Activated CD8-positive, alpha-beta T cell treated with anti-CD3 and anti-CD28 coated beads for 36 hours (primary cell): ENCODE measurements at regions of chr12 and their contacts with region 1.

Region 1: GRCh38 chr12:120580787-120581723 is at the start of gene POP5:
- DNase-seq: peak; percentile 97
- ATAC-seq: peak; percentile 96
- H3K4me3 Mint-ChIP-seq: peak within 1 kb of the TSS; percentile 98
- H3K27ac Mint-ChIP-seq: peak within 1 kb of the TSS; percentile 90
- H3K4me1 Mint-ChIP-seq: peaks cover 36% of the 10 kb centered on the region
- H3K27me3 Mint-ChIP-seq: peaks cover 13% of the 10 kb centered on the region
- CTCF ChIP-seq: no peak
- total RNA-seq, gene POP5: 44.3 to 51.1 TPM

Region 2: GRCh38 chr12:119902084-119902509 is 679.0 kb before region 1 on chr12:
- CTCF ChIA-PET with region 1: no interaction called
- POLR2A ChIA-PET with region 1: no interaction called
- intact Hi-C with region 1: no loop called
- DNase-seq: peak; percentile 89
- ATAC-seq: peak; percentile 100
- H3K4me3 Mint-ChIP-seq: no peak overlapping the region
- H3K27ac Mint-ChIP-seq: no peak overlapping the region
- H3K4me1 Mint-ChIP-seq: peaks cover 4% of the 10 kb centered on the region
- H3K27me3 Mint-ChIP-seq: no peaks in the 10 kb centered on the region
- CTCF ChIP-seq: peak; percentile 84

Region 3: DNA sequence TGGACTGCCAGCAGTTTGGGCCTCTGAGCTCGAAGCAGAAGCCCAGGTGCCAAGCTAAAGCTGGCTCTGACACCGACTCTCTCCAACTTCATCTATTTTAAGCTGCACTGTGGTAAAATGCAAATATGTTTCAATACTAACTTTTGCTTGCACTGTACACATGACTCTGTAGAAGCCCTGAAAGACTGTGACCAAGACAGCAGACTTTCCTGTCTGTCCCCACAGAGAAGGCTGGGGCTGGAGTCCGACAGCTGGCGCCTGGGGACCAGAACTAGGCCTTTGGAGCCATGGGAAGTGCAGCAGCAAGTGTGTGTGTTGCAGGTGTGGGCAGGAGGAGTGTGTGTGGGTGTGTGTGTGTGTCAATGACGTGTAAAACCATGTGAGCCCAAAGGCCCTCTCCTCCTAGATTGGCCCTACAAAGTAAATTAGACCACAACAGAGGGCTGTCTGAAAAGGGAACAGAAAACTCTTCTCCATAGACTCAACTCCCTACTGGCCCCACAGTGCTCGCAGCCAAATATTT is 448.1 kb before region 1 on chr12:
- CTCF ChIA-PET with region 1: no interaction called
- POLR2A ChIA-PET with region 1: no interaction called
- intact Hi-C with region 1: no loop called
- DNase-seq: no peak
- ATAC-seq: no peak
- H3K4me3 Mint-ChIP-seq: no peak overlapping the region
- H3K27ac Mint-ChIP-seq: no peak overlapping the region
- H3K4me1 Mint-ChIP-seq: peaks cover 7% of the 10 kb centered on the region
- H3K27me3 Mint-ChIP-seq: no peaks in the 10 kb centered on the region
- CTCF ChIP-seq: no peak

Region 4: DNA sequence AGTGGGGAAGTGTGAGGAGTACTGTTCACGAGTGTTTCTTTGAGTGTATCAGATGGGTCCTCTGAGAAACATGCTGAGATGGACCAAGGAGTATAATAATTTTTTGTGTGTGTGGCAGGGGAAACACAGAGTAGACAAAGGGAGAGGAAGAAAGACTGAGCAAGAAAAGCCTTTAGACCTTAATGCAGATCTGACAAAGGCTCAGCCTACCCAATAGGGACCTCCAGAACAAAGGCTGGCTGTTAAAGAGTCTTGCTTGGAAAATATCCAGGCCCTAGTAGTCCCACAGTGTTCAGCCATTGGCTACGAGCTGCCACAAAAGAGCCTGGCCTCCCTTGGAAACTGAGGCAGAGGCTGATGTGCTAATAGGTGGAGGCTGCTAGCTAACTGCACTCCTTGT is 65.6 kb before region 1 on chr12:
- CTCF ChIA-PET with region 1: no interaction called
- POLR2A ChIA-PET with region 1: no interaction called
- intact Hi-C with region 1: no loop called
- DNase-seq: no peak
- ATAC-seq: no peak
- H3K4me3 Mint-ChIP-seq: no peak overlapping the region
- H3K27ac Mint-ChIP-seq: no peak overlapping the region
- H3K4me1 Mint-ChIP-seq: no peaks in the 10 kb centered on the region
- H3K27me3 Mint-ChIP-seq: no peaks in the 10 kb centered on the region
- CTCF ChIP-seq: no peak

Region 5: DNA sequence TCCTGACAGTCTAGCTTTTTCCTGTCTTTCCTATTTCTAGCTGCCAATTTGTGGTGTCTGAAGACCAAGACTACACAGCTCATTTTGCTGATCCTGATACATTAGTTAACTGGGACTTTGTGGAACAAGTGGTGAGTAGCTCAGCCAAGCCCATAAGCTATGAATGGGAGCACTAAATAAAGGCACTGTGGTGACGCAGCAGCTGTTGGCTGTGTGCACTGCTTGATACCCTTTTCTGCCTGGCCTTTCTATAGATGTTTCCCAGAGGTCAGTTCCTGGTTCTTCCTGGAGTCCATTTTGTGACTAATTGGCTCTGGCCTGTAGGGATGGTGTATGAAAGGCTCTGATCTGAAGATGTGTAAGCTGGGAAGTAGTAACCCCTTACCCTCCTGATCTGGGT is 26.4 kb before region 1 on chr12:
- CTCF ChIA-PET with region 1: interaction called, 12 read pairs
- POLR2A ChIA-PET with region 1: no interaction called
- intact Hi-C with region 1: no loop called
- DNase-seq: no peak
- ATAC-seq: no peak
- H3K4me3 Mint-ChIP-seq: no peak overlapping the region
- H3K27ac Mint-ChIP-seq: no peak overlapping the region
- H3K4me1 Mint-ChIP-seq: peaks cover 5% of the 10 kb centered on the region
- H3K27me3 Mint-ChIP-seq: no peaks in the 10 kb centered on the region
- CTCF ChIP-seq: no peak

Region 6: GRCh38 chr12:120620624-120621023 is 39.6 kb after region 1 on chr12:
- CTCF ChIA-PET with region 1: interaction called, 14 read pairs
- POLR2A ChIA-PET with region 1: no interaction called
- intact Hi-C with region 1: no loop called
- DNase-seq: no peak
- ATAC-seq: no peak
- H3K4me3 Mint-ChIP-seq: no peak overlapping the region
- H3K27ac Mint-ChIP-seq: no peak overlapping the region
- H3K4me1 Mint-ChIP-seq: no peaks in the 10 kb centered on the region
- H3K27me3 Mint-ChIP-seq: peaks cover 11% of the 10 kb centered on the region
- CTCF ChIP-seq: no peak

Region 7: DNA sequence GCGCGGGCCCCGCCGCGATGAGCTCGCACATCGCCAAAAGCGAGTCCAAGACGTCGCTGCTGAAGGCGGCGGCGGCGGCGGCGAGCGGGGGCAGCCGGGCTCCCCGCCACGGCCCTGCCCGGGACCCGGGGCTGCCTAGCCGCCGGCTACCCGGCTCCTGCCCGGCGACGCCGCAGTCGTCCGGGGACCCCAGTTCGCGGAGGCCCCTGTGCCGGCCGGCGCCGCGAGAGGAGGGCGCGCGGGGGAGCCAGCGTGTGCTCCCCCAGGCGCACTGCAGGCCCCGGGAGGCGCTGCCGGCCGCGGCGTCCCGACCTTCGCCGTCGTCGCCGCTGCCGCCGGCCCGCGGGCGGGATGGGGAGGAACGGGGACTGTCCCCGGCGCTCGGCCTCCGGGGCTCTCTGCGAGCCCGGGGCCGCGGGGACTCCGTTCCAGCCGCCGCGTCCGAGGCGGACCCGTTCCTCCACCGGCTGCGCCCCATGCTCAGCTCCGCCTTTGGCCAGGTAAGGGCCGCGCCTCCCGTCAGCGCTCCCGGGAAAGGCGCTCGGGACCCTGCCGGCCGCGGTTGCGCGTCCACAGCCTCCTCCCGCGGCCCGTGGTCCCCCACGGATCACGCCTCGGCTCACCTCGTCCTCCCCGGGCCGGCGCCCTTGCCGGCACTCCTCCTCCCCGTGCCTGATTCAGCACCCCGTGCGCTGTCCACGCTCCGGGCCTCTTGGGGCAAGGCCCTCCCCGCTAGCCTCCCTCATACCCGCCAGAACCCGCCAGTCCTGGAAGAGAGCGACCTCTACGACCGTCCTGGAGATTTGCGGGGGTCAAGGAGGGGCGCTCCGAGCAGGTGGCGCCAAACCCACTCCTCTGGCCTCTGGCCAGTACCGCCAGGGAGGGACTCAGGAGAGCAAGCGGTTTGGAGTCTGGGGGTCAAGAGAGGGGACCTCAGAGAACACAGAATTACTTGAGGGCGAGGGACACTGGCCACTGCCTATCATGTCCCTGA is 60.1 kb after region 1 on chr12:
- CTCF ChIA-PET with region 1: interaction called, 180 read pairs
- POLR2A ChIA-PET with region 1: interaction called, 3 read pairs
- intact Hi-C with region 1: no loop called
- DNase-seq: peak; percentile 70
- ATAC-seq: peak; percentile 81
- H3K4me3 Mint-ChIP-seq: peak overlapping the region; percentile 58
- H3K27ac Mint-ChIP-seq: no peak overlapping the region
- H3K4me1 Mint-ChIP-seq: peaks cover 5% of the 10 kb centered on the region
- H3K27me3 Mint-ChIP-seq: peaks cover 41% of the 10 kb centered on the region
- CTCF ChIP-seq: no peak

Region 8: GRCh38 chr12:120686690-120687577 is 105.9 kb after region 1 on chr12 and contains the start of gene MLEC:
- CTCF ChIA-PET with region 1: interaction called, 28 read pairs
- POLR2A ChIA-PET with region 1: interaction called, 5 read pairs
- intact Hi-C with region 1: no loop called
- DNase-seq: peak; percentile 99
- ATAC-seq: peak; percentile 87
- H3K4me3 Mint-ChIP-seq: peak within 1 kb of the TSS; percentile 92
- H3K27ac Mint-ChIP-seq: peak within 1 kb of the TSS; percentile 93
- H3K4me1 Mint-ChIP-seq: peaks cover 36% of the 10 kb centered on the region
- H3K27me3 Mint-ChIP-seq: no peaks in the 10 kb centered on the region
- CTCF ChIP-seq: no peak
- total RNA-seq, gene MLEC: 79.2 to 79.4 TPM

Region 9: DNA sequence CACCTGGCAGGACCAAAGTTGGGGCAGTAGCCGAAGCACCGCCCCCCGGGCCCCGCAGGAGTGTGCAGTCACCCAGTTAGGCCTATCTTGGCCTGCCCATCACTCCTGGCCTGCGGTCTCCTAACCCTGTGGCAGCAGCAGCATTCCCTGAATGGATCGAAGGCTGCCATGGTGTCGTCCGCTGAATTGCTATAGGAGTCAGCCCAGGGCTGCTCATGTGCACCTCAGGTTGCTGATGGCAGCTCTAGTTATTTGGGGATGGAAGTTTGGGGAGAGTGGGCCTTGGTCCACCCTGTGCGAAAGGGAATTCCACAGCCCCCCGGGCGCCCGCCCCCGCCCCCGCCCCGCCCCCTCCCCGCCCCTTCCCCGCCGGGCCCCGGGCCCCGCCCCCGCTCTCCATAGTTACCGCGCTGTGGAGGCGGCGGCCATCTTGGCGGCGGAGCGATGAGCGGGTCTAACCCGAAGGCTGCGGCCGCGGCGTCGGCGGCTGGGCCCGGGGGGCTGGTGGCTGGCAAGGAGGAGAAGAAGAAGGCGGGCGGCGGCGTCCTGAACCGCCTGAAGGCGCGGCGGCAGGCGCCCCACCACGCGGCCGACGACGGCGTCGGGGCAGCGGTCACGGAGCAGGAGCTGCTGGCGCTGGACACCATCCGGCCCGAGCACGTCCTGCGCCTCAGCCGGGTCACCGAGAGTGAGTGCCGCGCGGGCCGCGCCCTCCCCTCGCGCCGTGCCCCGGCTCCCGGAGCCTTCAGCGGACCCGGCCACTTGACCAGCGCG is 129.2 kb after region 1 on chr12 and contains the start of gene UNC119B:
- CTCF ChIA-PET with region 1: interaction called, 10 read pairs
- POLR2A ChIA-PET with region 1: interaction called, 3 read pairs
- intact Hi-C with region 1: loop called (anchors 5 kb)
- DNase-seq: peak; percentile 76
- ATAC-seq: peak; percentile 81
- H3K4me3 Mint-ChIP-seq: peak within 1 kb of the TSS; percentile 80
- H3K27ac Mint-ChIP-seq: peak within 1 kb of the TSS; percentile 76
- H3K4me1 Mint-ChIP-seq: peaks cover 26% of the 10 kb centered on the region
- H3K27me3 Mint-ChIP-seq: no peaks in the 10 kb centered on the region
- CTCF ChIP-seq: no peak
- total RNA-seq, gene UNC119B: 23.8 to 24.3 TPM

Region 10: GRCh38 chr12:120783197-120783596 is 202.1 kb after region 1 on chr12:
- CTCF ChIA-PET with region 1: no interaction called
- POLR2A ChIA-PET with region 1: no interaction called
- intact Hi-C with region 1: no loop called
- DNase-seq: peak; percentile 19
- ATAC-seq: peak; percentile 86
- H3K4me3 Mint-ChIP-seq: peak overlapping the region; percentile 28
- H3K27ac Mint-ChIP-seq: peak overlapping the region; percentile 89
- H3K4me1 Mint-ChIP-seq: peaks cover 26% of the 10 kb centered on the region
- H3K27me3 Mint-ChIP-seq: no peaks in the 10 kb centered on the region
- CTCF ChIP-seq: no peak

Region 11: DNA sequence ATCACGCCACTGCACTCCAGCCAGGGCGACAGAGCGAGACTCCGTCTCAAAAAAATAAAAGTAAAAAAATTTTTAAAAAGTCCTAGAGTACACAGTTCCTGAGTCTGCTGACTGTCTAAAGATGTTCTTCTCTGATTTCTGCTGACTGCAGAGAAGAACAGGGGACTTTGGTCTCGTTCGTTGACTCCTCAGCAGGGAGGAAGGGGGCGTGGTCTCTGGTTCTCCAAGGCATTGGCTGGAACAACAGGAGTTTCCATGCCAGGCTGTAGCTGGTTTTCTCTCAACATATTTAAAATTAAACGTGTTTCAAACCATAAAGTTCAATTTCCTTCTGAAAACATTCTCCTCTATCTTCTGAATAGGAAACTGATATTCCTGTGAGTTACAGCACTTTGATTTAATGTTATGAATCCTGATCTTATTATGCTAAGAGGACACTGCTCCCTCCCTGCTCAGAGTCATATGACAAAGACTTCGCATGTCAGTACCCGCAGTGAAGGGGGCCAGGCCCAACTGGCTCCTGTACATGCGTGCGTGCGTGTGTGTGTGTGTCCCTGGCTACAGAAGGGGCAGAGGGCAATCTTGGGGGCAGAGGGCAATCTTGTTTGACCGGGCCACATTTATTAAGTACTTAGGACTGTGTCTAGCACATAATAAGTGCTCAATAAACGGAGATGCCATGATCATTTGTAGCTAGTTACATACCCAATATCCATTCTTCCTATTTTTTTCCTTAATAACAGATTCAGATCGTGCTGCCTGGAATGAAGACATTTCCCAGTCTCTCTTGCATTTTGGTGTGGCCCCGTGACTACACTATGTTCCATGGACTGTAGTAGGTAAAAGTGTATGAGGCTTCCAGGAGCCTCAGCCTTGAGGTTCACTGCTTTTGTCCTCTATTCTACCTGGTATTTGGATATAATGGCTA is 380.8 kb after region 1 on chr12:
- CTCF ChIA-PET with region 1: no interaction called
- POLR2A ChIA-PET with region 1: no interaction called
- intact Hi-C with region 1: loop called (anchors 10 kb)
- DNase-seq: no peak
- ATAC-seq: no peak
- H3K4me3 Mint-ChIP-seq: no peak overlapping the region
- H3K27ac Mint-ChIP-seq: peak overlapping the region; percentile 12
- H3K4me1 Mint-ChIP-seq: peaks cover 37% of the 10 kb centered on the region
- H3K27me3 Mint-ChIP-seq: no peaks in the 10 kb centered on the region
- CTCF ChIP-seq: no peak